Heart left ventricle (tissue), 16 donors: ENCODE measurements at regions of chr12 and their contacts with region 1.

Region 1: GRCh38 chr12:122902854-122903692 is 7.1 kb upstream of the VPS37B start:
- DNase-seq: no peak
- ATAC-seq: no peak
- H3K4me3 ChIP-seq: no peak overlapping the region
- H3K27ac ChIP-seq: no peak overlapping the region
- H3K4me1 ChIP-seq: peaks cover 0 to 34% (median 6%) of the 10 kb centered on the region in 12 donors
- H3K27me3 ChIP-seq: no peaks in the 10 kb centered on the region
- CTCF ChIP-seq: no peak
- POLR2A ChIP-seq: no peak

Region 2: GRCh38 chr12:122790393-122791075 is 112.5 kb before region 1 on chr12:
- intact Hi-C with region 1: no loop called
- DNase-seq: no peak
- ATAC-seq: no peak
- H3K4me3 ChIP-seq: no peak overlapping the region
- H3K27ac ChIP-seq: no peak overlapping the region
- H3K4me1 ChIP-seq: peaks cover 0 to 3% (median 0%) of the 10 kb centered on the region in 12 donors
- H3K27me3 ChIP-seq: no peaks in the 10 kb centered on the region
- CTCF ChIP-seq: no peak
- POLR2A ChIP-seq: no peak

Region 3: DNA sequence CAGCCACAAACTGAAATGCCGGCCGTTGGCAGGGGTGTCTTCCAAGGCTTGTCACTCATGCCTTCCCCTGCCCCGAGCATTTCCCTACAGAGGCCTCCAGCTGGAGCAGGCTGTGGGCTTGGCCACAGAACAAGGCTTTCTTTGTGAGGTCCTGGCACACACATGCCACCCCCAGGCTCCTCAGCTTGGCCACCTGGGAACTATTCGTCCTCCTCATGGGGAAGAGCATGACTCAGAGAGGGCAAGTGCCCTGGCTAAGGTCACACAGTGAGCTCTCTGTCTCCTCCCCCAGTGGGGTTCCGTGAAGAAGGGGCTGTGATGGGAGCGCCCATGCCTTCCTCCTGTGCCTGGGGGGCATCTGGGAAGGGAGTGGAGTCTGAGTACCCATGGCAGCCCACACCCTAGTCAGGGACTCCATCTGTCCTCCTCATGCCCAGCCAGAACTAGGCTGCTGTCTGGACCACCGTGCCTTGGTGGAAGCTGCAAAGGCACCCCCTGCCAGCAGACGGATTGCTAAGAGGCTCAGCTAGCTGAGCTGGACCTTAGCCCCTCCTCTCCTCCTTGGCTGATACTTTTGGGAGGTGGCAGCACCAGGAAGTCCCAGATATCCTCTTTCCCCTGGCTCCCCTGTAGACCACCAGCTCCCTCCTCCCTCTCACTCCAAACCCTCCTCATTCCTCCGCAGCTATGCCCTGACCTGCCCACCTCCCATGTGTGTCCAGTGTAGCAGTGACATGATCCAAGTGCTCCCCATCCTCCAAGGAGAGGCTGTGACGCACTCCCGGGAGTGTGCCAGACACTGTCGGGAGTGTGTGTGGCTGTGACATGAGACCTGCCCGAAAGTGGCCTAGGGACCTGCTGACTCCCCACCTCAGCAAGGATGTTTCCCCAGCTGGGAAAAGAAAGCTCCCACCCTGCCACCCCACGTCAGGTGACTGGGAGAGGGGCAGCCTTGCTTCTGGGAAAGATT is 41.8 kb after region 1 on chr12:
- intact Hi-C with region 1: loop called in 1 of 10 experiments (anchors 5 kb)
- DNase-seq: no peak
- ATAC-seq: no peak
- H3K4me3 ChIP-seq: no peak overlapping the region
- H3K27ac ChIP-seq: peak overlapping the region in 5 of 12 donors; percentile 43 to 88 (median 79)
- H3K4me1 ChIP-seq: peaks cover 0 to 53% (median 39%) of the 10 kb centered on the region in 12 donors
- H3K27me3 ChIP-seq: no peaks in the 10 kb centered on the region
- CTCF ChIP-seq: no peak
- POLR2A ChIP-seq: no peak

Region 4: GRCh38 chr12:122965851-122966722 is 63.0 kb after region 1 on chr12 and contains the start of gene ABCB9:
- intact Hi-C with region 1: no loop called
- DNase-seq: peak; percentile 93 to 97 (median 94)
- ATAC-seq: peak; percentile 80 to 94 (median 92)
- H3K4me3 ChIP-seq: peak within 1 kb of the TSS; percentile 53 to 94 (median 70)
- H3K27ac ChIP-seq: peak within 1 kb of the TSS in 11 of 12 donors; percentile 13 to 79 (median 61)
- H3K4me1 ChIP-seq: peaks cover 0 to 53% (median 30%) of the 10 kb centered on the region in 12 donors
- H3K27me3 ChIP-seq: no peaks in the 10 kb centered on the region
- CTCF ChIP-seq: no peak
- POLR2A ChIP-seq: peak in 1 of 2 donors; percentile 78
- total RNA-seq, gene ABCB9: 3.1 to 8.6 (median 4.7) TPM

Region 5: DNA sequence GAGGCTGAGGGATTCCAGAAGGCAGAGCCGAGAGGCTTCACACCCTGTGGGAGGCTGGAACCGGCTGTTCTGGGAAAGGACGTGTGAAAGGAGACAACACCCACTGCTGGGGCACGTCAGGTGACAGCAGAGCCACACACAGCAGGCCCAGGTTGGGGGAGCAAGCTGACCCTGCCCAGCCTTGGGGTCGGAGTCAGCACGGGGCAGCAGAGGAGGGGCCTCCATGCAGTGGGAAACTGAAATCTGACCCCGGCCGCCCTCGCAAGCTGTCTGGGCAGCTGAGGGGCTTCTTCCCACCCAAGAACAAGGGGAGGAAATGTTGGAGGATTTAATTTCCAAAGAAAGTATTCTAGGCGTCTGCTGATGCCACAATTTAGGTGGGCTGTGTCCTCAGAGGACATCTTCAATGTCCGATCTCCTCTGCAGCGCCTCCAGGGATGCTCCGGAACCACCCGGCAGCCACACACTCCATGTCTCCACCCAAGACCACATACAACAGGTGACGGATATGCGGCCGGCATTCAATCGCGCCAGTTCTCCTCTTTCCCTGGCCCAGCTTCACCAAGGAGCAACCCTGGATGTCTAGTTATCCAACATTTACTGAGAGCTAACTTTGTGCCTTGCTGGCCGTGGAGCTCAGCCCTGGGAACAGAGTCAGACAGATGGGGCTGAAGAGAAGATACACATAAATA is 585.6 kb after region 1 on chr12:
- intact Hi-C with region 1: no loop called
- DNase-seq: no peak
- ATAC-seq: peak in 3 of 4 donors; percentile 24 to 48 (median 42)
- H3K4me3 ChIP-seq: no peak overlapping the region
- H3K27ac ChIP-seq: peak overlapping the region in 4 of 12 donors; percentile 3 to 46 (median 12)
- H3K4me1 ChIP-seq: peaks cover 0 to 18% (median 6%) of the 10 kb centered on the region in 12 donors
- H3K27me3 ChIP-seq: no peaks in the 10 kb centered on the region
- CTCF ChIP-seq: no peak
- POLR2A ChIP-seq: no peak